CD4-positive, alpha-beta T cell (primary cell): ENCODE measurements at regions of chr9 and their contacts with region 1.

Region 1: GRCh38 chr9:6412487-6413364 is at the start of gene UHRF2:
- DNase-seq: peak; percentile 98 to 100 (median 99)
- ATAC-seq: peak; percentile 90
- H3K4me3 ChIP-seq: peak within 1 kb of the TSS; percentile 70
- H3K4me3 Mint-ChIP-seq: peak within 1 kb of the TSS; percentile 93
- H3K27ac ChIP-seq: peak within 1 kb of the TSS; percentile 81 to 91
- H3K27ac Mint-ChIP-seq: peak within 1 kb of the TSS; percentile 88
- H3K4me1 ChIP-seq: peaks cover 32% of the 10 kb centered on the region
- H3K4me1 Mint-ChIP-seq: peaks cover 42% of the 10 kb centered on the region
- H3K27me3 ChIP-seq: no peaks in the 10 kb centered on the region
- H3K27me3 Mint-ChIP-seq: no peaks in the 10 kb centered on the region
- CTCF ChIP-seq: no peak
- total RNA-seq, gene UHRF2: 141 to 149 TPM

Region 2: DNA sequence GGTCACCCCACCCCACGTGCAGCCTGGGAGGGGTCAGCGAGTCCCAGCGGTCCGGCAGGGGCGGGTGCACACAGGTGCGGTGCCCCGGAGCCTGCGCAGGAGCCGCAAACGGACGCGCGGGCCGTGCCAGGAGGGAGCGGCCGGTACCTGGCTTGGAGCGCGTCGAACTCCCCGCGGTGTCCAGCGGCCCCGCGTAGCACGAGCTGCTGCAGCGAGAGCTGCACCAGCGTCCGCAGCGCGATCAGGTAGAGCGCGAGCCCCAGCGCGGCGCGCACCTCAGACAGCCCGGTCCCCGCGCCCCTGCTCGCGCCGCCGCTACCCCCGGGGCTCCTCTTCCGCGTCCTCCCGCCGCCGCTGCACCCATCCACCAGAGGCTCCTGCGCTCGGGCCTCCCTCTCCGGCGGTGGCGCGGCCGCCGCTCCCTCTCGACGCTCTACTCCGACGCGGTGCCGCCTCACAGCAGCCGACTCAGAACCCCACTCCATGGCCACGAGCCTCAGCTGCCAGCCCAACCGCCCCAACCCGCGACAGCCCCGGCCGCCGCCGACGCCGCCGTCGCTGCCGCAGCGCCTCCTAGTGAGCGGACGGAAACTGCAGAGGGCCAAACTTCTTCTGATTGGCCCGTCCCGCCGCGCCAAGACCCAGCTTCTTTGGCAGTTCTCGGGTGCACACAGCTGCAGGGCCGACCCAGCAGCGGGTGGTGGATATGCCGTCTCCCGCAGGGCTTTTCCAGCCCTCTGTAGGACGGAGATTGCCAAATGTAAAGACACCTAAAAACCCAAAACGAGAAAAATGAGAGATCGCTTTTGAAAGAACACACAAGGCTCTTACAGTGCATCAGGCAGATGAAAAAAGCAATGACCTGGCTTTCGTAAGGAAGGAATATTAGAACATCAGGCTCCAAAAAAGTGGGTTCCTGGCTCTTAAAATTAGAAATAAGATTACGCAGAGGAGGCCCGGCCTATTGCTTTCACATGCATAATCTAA is 579.9 kb before region 1 on chr9 and contains the start of gene ERMP1:
- CTCF ChIA-PET with region 1: no interaction called
- POLR2A ChIA-PET with region 1: no interaction called
- intact Hi-C with region 1: loop called in 1 of 2 experiments (anchors 10 kb)
- DNase-seq: peak; percentile 81 to 95 (median 90)
- ATAC-seq: peak; percentile 88
- H3K4me3 ChIP-seq: peak within 1 kb of the TSS; percentile 80
- H3K4me3 Mint-ChIP-seq: peak within 1 kb of the TSS; percentile 99
- H3K27ac ChIP-seq: peak within 1 kb of the TSS in 1 of 2 donors; percentile 36
- H3K27ac Mint-ChIP-seq: peak within 1 kb of the TSS; percentile 85
- H3K4me1 ChIP-seq: peaks cover 26% of the 10 kb centered on the region
- H3K4me1 Mint-ChIP-seq: peaks cover 53% of the 10 kb centered on the region
- H3K27me3 ChIP-seq: no peaks in the 10 kb centered on the region
- H3K27me3 Mint-ChIP-seq: no peaks in the 10 kb centered on the region
- CTCF ChIP-seq: peak; percentile 89
- total RNA-seq, gene ERMP1: 5.8 to 6.8 TPM

Region 3: DNA sequence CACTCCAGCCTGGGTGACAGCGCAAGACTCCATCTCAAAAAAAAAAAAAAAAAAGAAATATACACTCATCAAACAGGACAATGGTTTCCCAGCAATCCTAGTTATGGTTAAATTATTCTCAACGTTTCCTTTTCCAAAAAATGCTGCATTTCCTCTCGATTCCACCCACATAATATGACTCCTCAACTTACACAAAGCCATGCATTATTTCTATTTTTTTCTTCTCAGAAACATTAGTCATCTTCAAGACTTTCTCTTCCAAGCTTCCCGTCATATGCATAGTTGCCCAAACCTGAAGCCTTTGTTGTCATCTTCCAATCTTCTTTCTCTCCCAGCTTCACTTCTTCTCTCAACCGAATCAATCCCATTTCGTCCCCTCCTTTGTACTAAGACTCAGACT is 335.9 kb before region 1 on chr9:
- CTCF ChIA-PET with region 1: no interaction called
- POLR2A ChIA-PET with region 1: no interaction called
- intact Hi-C with region 1: loop called in 1 of 2 experiments (anchors 10 kb)
- DNase-seq: no peak
- ATAC-seq: no peak
- H3K4me3 ChIP-seq: no peak overlapping the region
- H3K4me3 Mint-ChIP-seq: no peak overlapping the region
- H3K27ac ChIP-seq: no peak overlapping the region
- H3K27ac Mint-ChIP-seq: no peak overlapping the region
- H3K4me1 ChIP-seq: peaks cover 4% of the 10 kb centered on the region
- H3K4me1 Mint-ChIP-seq: peaks cover 15% of the 10 kb centered on the region
- H3K27me3 ChIP-seq: no peaks in the 10 kb centered on the region
- H3K27me3 Mint-ChIP-seq: no peaks in the 10 kb centered on the region
- CTCF ChIP-seq: no peak

Region 4: GRCh38 chr9:6460189-6460768 is 47.6 kb after region 1 on chr9:
- CTCF ChIA-PET with region 1: no interaction called
- POLR2A ChIA-PET with region 1: interaction called, 15 read pairs
- intact Hi-C with region 1: loop called in 1 of 2 experiments (anchors 5 kb)
- DNase-seq: no peak
- ATAC-seq: no peak
- H3K4me3 ChIP-seq: no peak overlapping the region
- H3K4me3 Mint-ChIP-seq: no peak overlapping the region
- H3K27ac ChIP-seq: no peak overlapping the region
- H3K27ac Mint-ChIP-seq: no peak overlapping the region
- H3K4me1 ChIP-seq: no peaks in the 10 kb centered on the region
- H3K4me1 Mint-ChIP-seq: peaks cover 55% of the 10 kb centered on the region
- H3K27me3 ChIP-seq: no peaks in the 10 kb centered on the region
- H3K27me3 Mint-ChIP-seq: no peaks in the 10 kb centered on the region
- CTCF ChIP-seq: no peak

Region 5: DNA sequence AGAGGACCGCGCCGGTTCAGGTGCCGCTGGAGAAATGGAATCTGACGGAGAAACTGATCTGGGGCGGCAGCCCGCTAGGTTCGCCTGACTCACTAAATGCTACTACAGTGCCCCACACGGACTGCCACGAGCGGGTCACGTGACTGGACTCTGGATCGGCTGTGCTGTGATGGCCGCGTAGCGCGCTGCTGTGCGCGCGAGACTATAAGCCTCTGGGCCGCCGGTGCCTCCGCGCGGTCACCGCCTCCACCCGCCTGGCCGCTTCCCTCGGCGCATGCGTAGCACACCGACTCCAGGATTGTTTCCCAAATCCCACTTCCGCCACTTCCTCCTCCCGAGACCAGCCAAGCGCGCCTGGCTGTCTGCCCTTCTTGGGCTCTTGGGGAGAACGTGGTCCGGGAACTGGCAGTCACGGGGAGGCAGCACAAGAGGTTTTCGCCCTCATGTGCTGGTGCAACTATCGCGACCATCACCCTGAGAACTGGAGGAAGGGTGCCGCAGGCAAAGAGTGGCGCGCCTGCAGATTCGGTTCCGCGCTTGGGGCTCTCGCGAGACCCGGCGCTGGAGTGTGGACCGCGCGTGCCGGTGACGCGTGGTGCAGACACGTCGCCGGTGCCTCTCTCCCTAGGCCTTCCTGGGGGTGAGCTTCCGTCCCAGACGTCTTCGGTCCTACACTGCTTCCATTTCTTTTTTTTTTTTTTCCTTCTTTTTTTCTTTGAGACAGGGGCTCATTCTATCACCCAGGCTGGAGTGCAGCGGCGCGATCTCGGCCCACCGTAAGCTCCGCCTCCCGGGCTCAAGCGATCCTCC is 268.6 kb after region 1 on chr9:
- CTCF ChIA-PET with region 1: no interaction called
- POLR2A ChIA-PET with region 1: interaction called, 30 read pairs
- intact Hi-C with region 1: loop called in 1 of 2 experiments (anchors 2 kb)
- DNase-seq: peak; percentile 82 to 97 (median 88)
- ATAC-seq: peak; percentile 90
- H3K4me3 ChIP-seq: peak overlapping the region; percentile 85
- H3K4me3 Mint-ChIP-seq: peak overlapping the region; percentile 89
- H3K27ac ChIP-seq: peak overlapping the region; percentile 96 to 98
- H3K27ac Mint-ChIP-seq: peak overlapping the region; percentile 99
- H3K4me1 ChIP-seq: peaks cover 23% of the 10 kb centered on the region
- H3K4me1 Mint-ChIP-seq: peaks cover 17% of the 10 kb centered on the region
- H3K27me3 ChIP-seq: no peaks in the 10 kb centered on the region
- H3K27me3 Mint-ChIP-seq: no peaks in the 10 kb centered on the region
- CTCF ChIP-seq: no peak